Activated CD4-positive, alpha-beta T cell treated with anti-CD3 and anti-CD28 coated beads, Interleukin-2, amount 10 ng/mL, durations not matched to agents 24 days and 14 days (primary cell): ENCODE measurements at regions of chr5 and their contacts with region 1.

Region 1: DNA sequence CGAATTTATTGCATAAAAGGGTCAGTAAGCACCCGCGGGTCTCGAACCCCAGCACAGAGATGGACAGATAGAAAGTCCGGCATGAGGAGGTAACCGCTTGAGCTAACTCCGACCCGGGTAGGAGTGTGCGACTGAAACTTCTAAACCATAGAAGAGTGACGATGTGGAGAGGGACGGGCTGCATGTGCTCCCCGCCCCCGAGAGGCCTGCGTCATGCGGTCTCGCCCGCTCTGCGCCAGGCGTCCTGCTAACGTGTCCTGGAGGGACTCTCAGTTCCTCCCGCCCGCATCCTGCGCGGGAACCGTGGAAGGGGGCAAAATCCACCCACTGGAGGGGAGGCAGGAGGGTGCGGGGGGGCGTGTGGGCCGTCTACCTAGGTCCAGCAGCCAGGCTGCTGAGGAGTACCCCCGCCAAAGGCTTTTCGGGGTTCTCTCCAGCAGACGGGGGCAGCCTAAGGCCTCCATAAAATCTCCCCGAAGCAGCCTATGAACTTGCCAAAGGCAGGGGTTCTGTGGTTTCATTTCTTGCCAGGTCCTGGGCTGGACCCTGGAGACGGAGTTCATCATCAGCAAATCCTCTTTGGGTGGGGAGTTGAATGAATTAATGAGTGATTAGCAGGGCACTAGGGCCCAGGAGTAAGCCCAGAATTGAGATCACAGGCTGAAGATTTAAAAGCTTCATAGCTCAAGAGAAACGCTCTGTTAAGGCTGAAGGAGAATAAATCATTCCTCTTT is 51.9 kb downstream of the TGFBI start:
- DNase-seq: peak; percentile 92
- H3K4me3 Mint-ChIP-seq: peak overlapping the region; percentile 78
- H3K27ac Mint-ChIP-seq: peak overlapping the region; percentile 83
- H3K4me1 Mint-ChIP-seq: peaks cover 12% of the 10 kb centered on the region
- H3K27me3 Mint-ChIP-seq: peaks cover 55% of the 10 kb centered on the region

Region 2: DNA sequence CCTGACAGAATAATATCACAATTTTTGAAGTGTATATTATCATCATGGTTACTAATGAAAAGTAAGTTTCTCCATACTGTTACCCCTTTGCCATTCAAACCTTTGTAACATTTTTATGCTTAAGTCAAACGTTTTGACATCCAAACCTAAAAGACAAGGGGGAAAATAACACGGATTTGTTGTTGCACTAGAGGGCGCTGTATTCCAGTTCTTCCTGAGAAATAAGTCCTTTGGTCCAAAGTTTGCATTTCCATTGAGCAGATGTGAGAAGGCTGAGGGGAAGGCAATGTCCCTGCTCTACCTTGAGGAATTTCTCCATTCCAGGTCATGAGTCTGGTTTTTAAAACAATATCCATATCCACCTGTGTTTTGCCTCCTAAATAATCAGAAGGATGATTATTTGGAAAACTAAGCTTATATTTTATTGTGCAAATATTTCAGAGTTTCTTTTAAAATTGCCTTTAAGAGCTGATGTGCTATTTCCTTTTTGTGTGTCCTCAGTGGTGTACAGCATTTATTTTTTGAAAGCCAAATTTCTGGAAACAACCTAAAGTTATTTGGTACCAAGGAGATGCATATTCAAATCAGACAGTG is 135.6 kb before region 1 on chr5:
- intact Hi-C with region 1: loop called (anchors 1 kb)
- DNase-seq: peak; percentile 74
- H3K4me3 Mint-ChIP-seq: no peak overlapping the region
- H3K27ac Mint-ChIP-seq: no peak overlapping the region
- H3K4me1 Mint-ChIP-seq: no peaks in the 10 kb centered on the region
- H3K27me3 Mint-ChIP-seq: no peaks in the 10 kb centered on the region

Region 3: DNA sequence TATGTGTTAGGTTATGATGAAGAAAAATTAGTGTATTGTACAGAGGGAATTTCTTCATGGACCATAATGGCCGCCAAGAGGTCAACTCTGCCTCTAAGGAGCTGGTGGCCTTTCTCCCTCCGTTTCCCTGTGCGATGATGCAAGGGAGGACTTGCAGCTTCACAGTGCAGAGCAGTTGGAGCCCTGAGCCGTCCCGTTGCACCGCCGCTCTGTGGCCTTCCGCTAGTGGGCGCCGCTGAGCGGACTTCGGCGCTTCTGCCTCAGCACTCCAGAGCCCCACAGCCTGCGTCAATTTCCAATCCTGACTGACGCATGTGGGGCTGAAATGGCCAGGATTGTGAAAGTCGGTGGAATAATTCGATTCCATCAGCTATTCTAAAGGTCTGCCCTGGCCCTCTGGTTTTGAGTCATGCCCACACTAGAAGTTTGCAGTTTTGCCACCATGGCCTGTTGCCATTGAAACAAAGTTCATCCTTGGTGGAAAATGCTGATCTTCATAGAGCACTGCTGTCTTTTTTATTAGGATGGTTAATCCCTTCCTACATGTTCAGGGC is 103.2 kb before region 1 on chr5:
- intact Hi-C with region 1: loop called (anchors 5 kb)
- DNase-seq: peak; percentile 85
- H3K4me3 Mint-ChIP-seq: no peak overlapping the region
- H3K27ac Mint-ChIP-seq: no peak overlapping the region
- H3K4me1 Mint-ChIP-seq: no peaks in the 10 kb centered on the region
- H3K27me3 Mint-ChIP-seq: peaks cover 35% of the 10 kb centered on the region

Region 4: DNA sequence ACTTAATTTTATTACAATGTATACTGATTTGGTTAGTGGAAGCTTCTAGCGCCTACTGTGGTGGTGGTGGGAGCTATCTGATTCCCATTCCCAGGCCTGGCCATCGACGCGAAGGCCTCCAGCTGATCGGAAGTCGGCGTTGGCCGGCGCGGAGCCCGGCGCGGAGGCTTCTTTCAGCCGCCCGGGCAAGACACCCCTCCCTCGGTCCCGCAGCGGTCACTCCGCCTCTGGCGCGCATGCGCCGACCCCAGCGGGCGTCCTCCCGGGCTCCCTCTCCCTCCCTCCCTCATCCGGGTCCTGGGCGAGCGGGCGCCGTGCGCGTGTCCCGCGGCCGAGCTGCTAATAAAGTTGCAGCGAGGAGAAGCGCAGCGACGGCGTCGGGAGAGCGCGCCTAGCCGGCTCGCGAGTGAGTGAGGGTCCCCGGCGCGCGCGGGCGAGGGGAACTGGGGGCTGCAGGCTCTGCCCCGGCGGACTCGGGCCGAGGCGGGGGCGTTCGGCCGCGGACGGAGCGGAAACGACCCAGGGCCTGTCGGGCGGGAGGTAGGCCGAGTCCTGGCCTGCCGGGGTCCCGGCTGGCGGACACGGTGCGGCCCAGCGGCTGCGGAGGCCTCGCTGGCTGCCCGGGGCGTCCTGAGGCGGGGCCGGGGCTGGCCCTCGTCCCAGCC is 52.0 kb after region 1 on chr5 and contains the start of gene SMAD5:
- intact Hi-C with region 1: loop called (anchors 2 kb)
- DNase-seq: peak; percentile 94
- H3K4me3 Mint-ChIP-seq: peak within 1 kb of the TSS; percentile 93
- H3K27ac Mint-ChIP-seq: peak within 1 kb of the TSS; percentile 87
- H3K4me1 Mint-ChIP-seq: peaks cover 16% of the 10 kb centered on the region
- H3K27me3 Mint-ChIP-seq: peaks cover 52% of the 10 kb centered on the region
- total RNA-seq, gene SMAD5: 12.8 and 16.7 TPM in 2 replicates

Region 5: DNA sequence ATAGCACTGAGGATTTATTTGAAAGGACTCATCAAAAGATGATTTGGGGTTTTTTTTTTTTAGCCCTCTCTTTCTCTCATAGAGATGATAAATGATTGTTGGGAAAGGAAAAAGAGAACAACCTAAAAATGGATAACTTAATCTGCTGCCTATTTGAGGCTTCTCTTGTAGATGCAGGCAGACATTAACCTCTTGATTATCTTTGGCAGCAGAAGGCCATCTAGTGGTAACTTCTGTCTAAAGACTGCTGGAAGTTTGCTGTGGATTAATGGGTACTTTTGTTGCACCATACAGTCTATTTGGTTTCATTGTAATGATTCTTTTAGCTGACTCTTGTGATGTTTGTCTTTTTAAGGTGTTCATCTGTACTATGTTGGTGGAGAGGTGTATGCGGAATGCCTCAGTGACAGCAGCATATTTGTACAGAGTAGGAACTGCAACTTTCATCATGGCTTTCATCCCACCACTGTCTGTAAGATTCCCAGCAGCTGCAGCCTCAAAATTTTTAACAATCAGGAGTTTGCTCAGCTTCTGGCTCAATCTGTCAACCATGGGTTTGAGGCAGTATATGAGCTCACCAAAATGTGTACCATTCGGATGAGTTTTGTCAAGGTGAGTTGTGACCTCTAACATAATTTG is 93.5 kb after region 1 on chr5:
- intact Hi-C with region 1: loop called (anchors 10 kb)
- DNase-seq: no peak
- H3K4me3 Mint-ChIP-seq: no peak overlapping the region
- H3K27ac Mint-ChIP-seq: no peak overlapping the region
- H3K4me1 Mint-ChIP-seq: no peaks in the 10 kb centered on the region
- H3K27me3 Mint-ChIP-seq: no peaks in the 10 kb centered on the region